Activated T-helper 2 cell treated with anti-CD3 and anti-CD28 coated beads, Interferon-gamma antibody, Interleukin-2, Interleukin-4, amounts not matched to agents 10 μg/mL and 5 μg/mL and 100 μg/mL, durations not matched to agents 14 hours and 24 hours and 36 hours (primary cell): ENCODE measurements at regions of chr5 and their contacts with region 1.

Region 1: DNA sequence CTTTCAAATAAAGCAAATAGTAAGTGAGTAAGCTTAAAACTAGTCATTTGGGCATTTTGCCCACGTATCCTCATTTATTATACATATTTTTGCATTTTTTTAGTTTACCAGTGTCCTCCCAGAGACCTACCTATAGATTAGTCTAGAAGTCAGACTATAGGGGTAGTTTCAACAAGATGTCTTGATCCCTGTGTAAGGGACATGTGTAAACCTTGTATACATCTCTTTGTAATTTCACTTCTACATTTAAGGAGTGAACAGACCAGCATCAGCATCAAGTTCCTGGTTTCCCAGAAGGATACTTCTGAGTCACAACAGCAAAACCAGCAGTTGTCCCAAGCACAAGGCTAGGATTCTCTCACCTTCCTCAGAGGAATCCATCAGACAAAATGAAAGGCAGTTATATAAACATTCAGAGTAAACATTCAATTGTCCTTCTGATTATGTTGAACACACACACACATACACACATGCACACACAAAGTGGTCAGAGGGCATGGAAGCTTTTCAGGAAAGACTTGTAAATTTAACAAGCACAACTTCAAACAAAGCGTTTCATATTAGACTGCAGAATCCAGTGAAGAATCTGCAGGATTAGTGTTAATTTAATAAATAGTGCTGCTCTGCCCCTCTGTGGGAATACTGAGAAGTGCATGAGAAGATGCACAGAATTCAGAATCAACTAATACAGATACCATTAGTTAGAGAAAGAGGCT is 55.4 kb downstream of the HINT1 start:
- DNase-seq: no peak
- H3K4me3 Mint-ChIP-seq: no peak overlapping the region
- H3K27ac Mint-ChIP-seq: no peak overlapping the region
- H3K4me1 Mint-ChIP-seq: peaks cover 6% of the 10 kb centered on the region
- H3K27me3 Mint-ChIP-seq: no peaks in the 10 kb centered on the region

Region 2: DNA sequence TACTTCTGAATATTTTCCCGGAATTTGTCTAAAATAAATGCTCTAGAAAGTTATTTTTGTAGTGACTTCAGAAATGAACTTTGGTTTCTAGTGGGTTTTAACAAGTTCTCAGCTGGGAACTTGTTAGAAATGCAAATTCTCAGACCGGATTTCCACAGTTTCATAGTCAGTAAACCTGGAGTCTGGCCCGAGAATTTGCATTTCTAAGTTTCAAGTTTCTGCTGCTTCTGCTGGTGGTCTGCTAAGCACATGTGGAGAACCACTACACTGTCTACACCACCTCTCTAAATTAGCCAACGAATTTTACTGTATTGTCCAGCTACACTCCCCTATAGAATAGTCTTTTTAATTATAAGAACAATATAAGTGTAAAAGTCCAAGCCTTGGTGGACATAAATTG is 997.5 kb before region 1 on chr5:
- intact Hi-C with region 1: loop called (anchors 5 kb)
- DNase-seq: no peak
- H3K4me3 Mint-ChIP-seq: no peak overlapping the region
- H3K27ac Mint-ChIP-seq: no peak overlapping the region
- H3K4me1 Mint-ChIP-seq: no peaks in the 10 kb centered on the region
- H3K27me3 Mint-ChIP-seq: peaks cover 1% of the 10 kb centered on the region

Region 3: GRCh38 chr5:130871346-130872086 is 238.2 kb before region 1 on chr5:
- intact Hi-C with region 1: loop called (anchors 1 kb)
- DNase-seq: peak; percentile 13
- H3K4me3 Mint-ChIP-seq: no peak overlapping the region
- H3K27ac Mint-ChIP-seq: no peak overlapping the region
- H3K4me1 Mint-ChIP-seq: peaks cover 4% of the 10 kb centered on the region
- H3K27me3 Mint-ChIP-seq: no peaks in the 10 kb centered on the region